ENCODE measurements at regions of chr16 and their contacts with region 1.

Region 1: GRCh38 chr16:84062734-84063640 is 20.4 kb upstream of the SLC38A8 start:
- DNase-seq: peak; percentile 48
- H3K4me3 ChIP-seq: no peak overlapping the region
- H3K27ac ChIP-seq: no peak overlapping the region
- H3K27me3 ChIP-seq: no peaks in the 10 kb centered on the region
- CTCF ChIP-seq: peak; percentile 87

Region 2: DNA sequence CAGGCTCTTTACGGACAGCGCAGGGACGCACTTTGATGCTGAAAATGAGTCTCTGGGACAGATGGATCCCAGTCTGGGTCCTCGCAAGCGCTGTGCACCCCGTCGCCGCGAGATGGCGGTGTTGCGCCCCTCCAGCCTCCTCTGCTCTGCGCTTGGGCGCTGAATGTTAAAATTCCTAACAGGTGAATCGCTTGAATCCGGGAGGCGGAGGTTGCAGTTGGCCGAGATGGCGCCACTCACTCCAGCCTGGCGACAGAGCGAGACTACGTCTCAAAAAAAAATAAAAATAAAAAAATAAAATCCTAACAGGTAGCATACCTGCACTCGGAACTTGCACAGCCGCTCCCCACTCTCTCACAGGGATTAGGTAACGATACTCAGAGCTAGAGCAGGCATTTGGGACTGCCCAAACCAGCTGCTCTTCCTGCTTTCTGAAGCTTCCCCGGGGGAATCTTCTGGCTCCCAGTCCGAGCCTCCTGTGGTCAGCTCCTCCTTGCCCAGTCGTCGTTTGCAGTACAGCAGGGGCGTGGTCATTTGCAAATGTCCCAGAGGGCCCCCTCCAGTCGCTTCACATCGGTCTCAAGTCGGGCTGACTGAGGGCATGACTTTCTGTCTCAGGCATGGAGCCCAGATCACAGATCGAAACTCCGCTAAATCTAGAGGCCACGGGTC is 136.1 kb before region 1 on chr16:
- CTCF ChIA-PET with region 1: interaction called, 29 read pairs
- POLR2A ChIA-PET with region 1: no interaction called
- DNase-seq: peak; percentile 30
- H3K4me3 ChIP-seq: no peak overlapping the region
- H3K27ac ChIP-seq: peak overlapping the region; percentile 31
- H3K27me3 ChIP-seq: no peaks in the 10 kb centered on the region
- CTCF ChIP-seq: peak; percentile 98

Region 3: GRCh38 chr16:83968306-83968851 is 94.6 kb before region 1 on chr16:
- CTCF ChIA-PET with region 1: interaction called, 171 read pairs
- POLR2A ChIA-PET with region 1: no interaction called
- DNase-seq: no peak
- H3K4me3 ChIP-seq: peak overlapping the region; percentile 42; the same call in 1 of the 2 replicates
- H3K27ac ChIP-seq: no peak overlapping the region
- H3K27me3 ChIP-seq: peaks cover 18% of the 10 kb centered on the region
- CTCF ChIP-seq: no peak

Region 4: GRCh38 chr16:83994087-83994486 is 68.9 kb before region 1 on chr16:
- CTCF ChIA-PET with region 1: interaction called, 20 read pairs
- POLR2A ChIA-PET with region 1: no interaction called
- DNase-seq: peak; percentile 61
- H3K4me3 ChIP-seq: no peak overlapping the region
- H3K27ac ChIP-seq: peak overlapping the region; percentile 11
- H3K27me3 ChIP-seq: peaks cover 3% of the 10 kb centered on the region
- CTCF ChIP-seq: no peak

Region 5: GRCh38 chr16:84175350-84176081 is 112.5 kb after region 1 on chr16:
- CTCF ChIA-PET with region 1: interaction called, 23 read pairs
- POLR2A ChIA-PET with region 1: no interaction called
- DNase-seq: peak; percentile 21
- H3K4me3 ChIP-seq: no peak overlapping the region
- H3K27ac ChIP-seq: no peak overlapping the region
- H3K27me3 ChIP-seq: peaks cover 7% of the 10 kb centered on the region
- CTCF ChIP-seq: peak; percentile 80

Region 6: GRCh38 chr16:84434800-84435199 is 371.8 kb after region 1 on chr16:
- CTCF ChIA-PET with region 1: no interaction called
- POLR2A ChIA-PET with region 1: no interaction called
- DNase-seq: no peak
- H3K4me3 ChIP-seq: no peak overlapping the region
- H3K27ac ChIP-seq: no peak overlapping the region
- H3K27me3 ChIP-seq: peaks cover 18% of the 10 kb centered on the region
- CTCF ChIP-seq: no peak